Activated CD4-positive, alpha-beta memory T cell treated with anti-CD3 and anti-CD28 coated beads, Interleukin-2, amount 10 ng/mL, durations not matched to agents 7 days and 5 days (primary cell): ENCODE measurements at regions of chr19 and their contacts with region 1.

Region 1: DNA sequence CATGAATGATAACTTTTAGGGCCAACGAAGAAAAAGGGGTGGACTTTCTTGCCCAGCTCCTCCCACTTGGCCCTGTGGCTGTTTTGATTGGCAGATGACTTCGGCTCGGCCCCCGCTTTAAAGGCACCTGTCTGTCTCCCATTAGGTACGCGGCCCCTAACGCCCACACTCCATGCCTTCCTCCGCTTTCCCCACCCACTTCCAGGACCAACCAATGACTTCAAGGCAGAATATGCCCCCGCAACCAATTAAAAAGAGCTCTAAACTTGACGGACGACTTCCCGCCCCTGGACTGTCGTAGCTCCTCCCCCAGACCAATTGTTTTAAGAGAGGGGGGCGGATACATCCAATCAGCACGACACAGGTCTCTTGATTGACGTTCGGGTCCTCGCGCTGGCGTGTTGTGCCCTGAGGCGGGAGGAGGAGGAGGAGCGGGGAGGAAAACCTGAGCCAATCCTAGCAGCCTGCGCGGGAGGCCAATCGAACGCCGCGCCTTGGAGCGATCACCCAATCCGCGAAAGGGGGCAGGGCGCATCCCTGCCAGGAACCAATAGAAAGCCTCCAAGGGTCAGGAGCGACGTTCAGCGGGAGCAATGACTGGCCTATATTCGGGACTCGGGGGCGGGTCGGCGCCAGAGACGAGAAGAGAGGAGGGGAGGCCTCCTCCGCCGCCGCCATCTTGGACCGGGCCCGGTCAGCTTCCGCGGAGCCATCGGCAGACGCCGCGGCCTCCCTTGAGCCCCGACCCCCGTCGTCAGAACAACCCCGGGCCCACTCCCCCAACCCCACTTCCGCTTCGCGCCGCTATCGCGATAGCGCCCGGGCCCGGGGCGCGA is at the start of gene CNOT3:
- DNase-seq: peak; percentile 99
- H3K4me3 Mint-ChIP-seq: peak within 1 kb of the TSS; percentile 82
- H3K27ac Mint-ChIP-seq: peak within 1 kb of the TSS; percentile 83
- H3K4me1 Mint-ChIP-seq: peaks cover 39% of the 10 kb centered on the region
- H3K27me3 Mint-ChIP-seq: no peaks in the 10 kb centered on the region
- total RNA-seq, gene CNOT3: 62.6 to 66.9 TPM

Region 2: DNA sequence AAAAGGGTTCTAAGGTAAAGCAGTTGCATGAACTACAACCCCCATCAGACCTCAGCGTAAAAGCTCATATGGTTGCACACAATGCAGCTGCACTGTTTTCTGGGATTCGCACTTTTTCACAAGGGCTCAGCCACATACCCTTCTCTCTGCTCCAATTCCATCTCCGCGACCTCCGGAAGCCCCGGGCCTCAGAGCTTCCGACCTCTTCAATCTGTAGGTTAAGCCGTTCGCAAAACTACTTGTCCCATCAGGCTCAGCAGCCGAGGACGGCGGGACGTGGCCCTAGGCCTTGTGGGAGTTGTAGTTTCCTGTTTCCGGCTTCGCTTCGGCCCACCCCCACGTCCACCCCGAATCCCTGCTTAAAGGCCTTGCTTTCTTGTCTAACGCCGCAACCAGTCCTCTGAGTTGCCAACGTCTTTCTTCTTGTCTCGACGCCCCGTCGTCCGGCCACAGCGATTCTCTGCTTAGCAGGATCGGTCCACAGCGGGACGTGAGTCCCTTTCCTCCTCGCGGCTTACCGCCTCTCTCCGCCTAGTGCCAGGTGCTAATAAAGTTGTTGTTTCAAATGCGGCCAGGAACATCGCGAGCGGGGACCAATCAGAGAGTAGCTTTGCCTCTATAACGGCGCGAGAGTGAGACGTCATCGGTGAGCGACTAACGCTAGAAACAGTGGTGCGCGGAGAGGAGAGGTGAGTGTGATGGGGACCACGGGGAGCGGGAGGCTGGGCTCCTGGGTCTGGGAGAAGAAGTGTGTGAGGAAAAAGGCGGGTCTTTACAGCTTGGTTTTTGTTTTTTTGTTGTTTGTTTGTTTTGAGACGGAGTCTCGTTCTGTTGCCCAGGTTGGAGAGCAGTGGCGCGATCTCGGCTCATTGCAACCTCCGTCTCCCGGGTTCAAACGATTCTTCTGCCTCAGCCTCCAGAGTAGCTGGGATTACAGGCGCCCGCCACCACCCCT is 21.9 kb before region 1 on chr19 and contains the starts of genes PRPF31 and TFPT:
- CTCF ChIA-PET with region 1: interaction called, 16 read pairs
- POLR2A ChIA-PET with region 1: interaction called, 52 read pairs
- DNase-seq: peak; percentile 97
- H3K4me3 Mint-ChIP-seq: peak within 1 kb of the TSS; percentile 86
- H3K27ac Mint-ChIP-seq: peak within 1 kb of the TSS; percentile 74
- H3K4me1 Mint-ChIP-seq: peaks cover 35% of the 10 kb centered on the region
- H3K27me3 Mint-ChIP-seq: no peaks in the 10 kb centered on the region
- total RNA-seq, gene PRPF31: 53.5 to 55.0 TPM
- total RNA-seq, gene TFPT: 44.4 to 47.1 TPM

Region 3: DNA sequence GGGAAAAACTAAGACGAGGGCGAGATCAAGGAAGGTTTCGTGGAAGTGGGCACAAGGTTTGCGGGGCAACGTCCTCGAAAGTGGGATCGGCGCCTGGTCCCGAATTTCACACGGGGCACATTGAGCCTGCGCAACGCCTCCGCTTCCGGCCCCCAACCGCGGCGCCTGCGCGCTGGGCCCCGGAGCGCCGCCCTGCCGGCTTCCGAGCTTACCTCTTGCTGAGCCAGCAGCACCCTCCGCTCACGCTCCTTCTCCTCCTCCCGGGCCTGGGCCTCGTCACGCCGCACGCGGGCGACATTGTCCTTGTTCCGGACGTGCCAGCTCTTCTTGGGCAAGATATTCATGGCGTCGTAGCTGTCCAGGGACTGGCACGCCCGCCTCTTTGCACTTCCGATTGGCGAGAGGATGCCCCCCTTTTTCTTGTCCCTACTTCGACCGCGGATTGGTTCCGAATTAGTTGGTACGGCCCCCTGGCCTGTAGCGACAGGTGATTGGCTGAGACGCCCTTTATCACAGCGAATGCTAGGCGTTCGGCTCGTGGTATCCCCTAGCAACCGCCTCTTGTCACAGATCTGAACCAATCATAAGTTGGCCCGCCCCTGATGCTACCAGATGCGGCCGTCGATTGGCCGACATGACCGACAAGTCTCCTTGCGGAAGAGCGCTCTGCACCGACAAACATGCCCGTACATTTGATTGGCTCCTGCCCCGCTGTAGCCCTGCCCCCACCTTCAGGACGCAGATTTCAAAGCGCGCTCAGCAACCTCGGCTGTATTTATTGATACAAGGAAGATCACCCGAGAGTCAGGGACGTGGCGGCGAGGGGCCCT is 22.3 kb after region 1 on chr19 and contains the start of gene LENG1:
- CTCF ChIA-PET with region 1: interaction called, 24 read pairs
- POLR2A ChIA-PET with region 1: interaction called, 66 read pairs
- DNase-seq: peak; percentile 100
- H3K4me3 Mint-ChIP-seq: peak within 1 kb of the TSS; percentile 94
- H3K27ac Mint-ChIP-seq: peak within 1 kb of the TSS; percentile 98
- H3K4me1 Mint-ChIP-seq: peaks cover 67% of the 10 kb centered on the region
- H3K27me3 Mint-ChIP-seq: peaks cover 1% of the 10 kb centered on the region
- total RNA-seq, gene LENG1: 8.3 to 9.2 TPM

Region 4: GRCh38 chr19:54189735-54190502 is 52.6 kb after region 1 on chr19:
- CTCF ChIA-PET with region 1: interaction called, 9 read pairs
- POLR2A ChIA-PET with region 1: interaction called, 15 read pairs
- DNase-seq: peak; percentile 100
- H3K4me3 Mint-ChIP-seq: peak overlapping the region; percentile 85
- H3K27ac Mint-ChIP-seq: peak overlapping the region; percentile 99
- H3K4me1 Mint-ChIP-seq: peaks cover 41% of the 10 kb centered on the region
- H3K27me3 Mint-ChIP-seq: no peaks in the 10 kb centered on the region

Region 5: GRCh38 chr19:54203151-54203611 is 65.9 kb after region 1 on chr19:
- CTCF ChIA-PET with region 1: no interaction called
- POLR2A ChIA-PET with region 1: interaction called, 23 read pairs
- DNase-seq: no peak
- H3K4me3 Mint-ChIP-seq: peak overlapping the region; percentile 91
- H3K27ac Mint-ChIP-seq: peak overlapping the region; percentile 55
- H3K4me1 Mint-ChIP-seq: peaks cover 78% of the 10 kb centered on the region
- H3K27me3 Mint-ChIP-seq: no peaks in the 10 kb centered on the region

Region 6: DNA sequence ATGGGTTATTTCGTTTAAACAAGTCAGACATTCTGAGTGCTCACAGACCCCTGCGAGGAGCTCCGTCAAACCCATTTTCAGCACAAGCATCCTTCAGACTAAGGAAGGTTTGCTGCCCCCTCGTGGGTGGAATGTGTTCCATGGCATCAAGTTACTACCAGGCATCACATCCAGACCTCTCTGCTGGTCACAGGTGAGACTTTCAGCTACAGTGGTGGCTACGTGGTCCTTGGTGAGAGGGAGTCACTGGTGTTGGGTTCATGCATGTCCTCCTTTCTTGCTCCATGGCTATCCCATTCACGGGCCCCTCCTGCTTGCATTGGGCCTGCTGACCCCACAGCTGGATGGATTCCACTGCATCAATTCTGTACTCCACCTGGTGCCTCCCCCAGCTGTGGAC is 128.8 kb after region 1 on chr19:
- CTCF ChIA-PET with region 1: interaction called, 11 read pairs
- POLR2A ChIA-PET with region 1: no interaction called
- DNase-seq: peak; percentile 77
- H3K4me3 Mint-ChIP-seq: no peak overlapping the region
- H3K27ac Mint-ChIP-seq: no peak overlapping the region
- H3K4me1 Mint-ChIP-seq: no peaks in the 10 kb centered on the region
- H3K27me3 Mint-ChIP-seq: peaks cover 36% of the 10 kb centered on the region

Region 7: DNA sequence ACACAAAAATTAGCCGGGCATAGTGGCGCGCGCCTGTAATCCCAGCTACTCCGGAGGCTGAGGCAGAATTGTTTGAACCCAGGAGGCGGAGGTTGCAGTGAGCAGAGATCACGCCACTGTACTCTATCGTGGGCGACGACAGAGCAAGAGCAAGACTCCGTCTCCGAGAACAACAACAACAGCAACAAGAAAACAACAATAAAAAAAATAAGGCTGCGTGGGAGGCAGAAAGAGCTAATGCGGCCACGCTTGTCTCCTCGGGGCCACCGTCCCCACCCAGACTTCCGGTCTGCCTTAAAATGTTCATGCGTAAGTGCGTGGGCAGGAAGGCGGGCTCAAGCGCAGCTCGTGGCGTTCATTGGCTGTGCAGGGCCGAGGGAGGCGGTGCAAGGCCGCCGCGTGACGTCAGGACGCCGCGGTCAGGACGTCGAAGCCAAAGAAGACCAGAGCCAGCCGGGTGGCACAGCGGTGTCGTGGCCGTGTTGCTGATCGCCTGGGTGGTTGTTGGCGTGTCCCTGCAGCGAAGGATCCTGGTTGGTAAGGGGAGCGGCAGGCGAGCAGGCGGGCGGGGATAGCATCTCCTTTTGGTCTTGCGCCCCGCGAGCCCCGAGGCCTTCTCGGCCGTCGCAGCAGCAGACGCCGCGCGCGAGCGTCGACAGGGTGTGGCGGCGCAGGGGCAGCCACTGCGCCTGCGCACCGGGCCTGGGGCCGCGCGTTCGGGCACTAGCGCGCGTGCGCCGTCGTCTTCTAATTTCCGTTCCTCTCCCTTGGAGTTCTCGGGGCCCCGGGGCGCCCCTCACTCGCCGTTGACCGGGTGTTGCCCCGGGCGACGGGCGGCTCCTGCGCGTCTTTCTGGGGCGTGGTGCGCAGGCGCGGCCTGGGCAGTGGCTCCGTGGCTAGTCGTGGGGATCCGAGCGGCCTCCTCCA is 311.7 kb after region 1 on chr19 and contains the start of gene LENG8:
- CTCF ChIA-PET with region 1: no interaction called
- POLR2A ChIA-PET with region 1: interaction called, 14 read pairs
- DNase-seq: peak; percentile 98
- H3K4me3 Mint-ChIP-seq: peak within 1 kb of the TSS; percentile 99
- H3K27ac Mint-ChIP-seq: peak within 1 kb of the TSS; percentile 97
- H3K4me1 Mint-ChIP-seq: peaks cover 49% of the 10 kb centered on the region
- H3K27me3 Mint-ChIP-seq: no peaks in the 10 kb centered on the region
- total RNA-seq, gene LENG8: 231 to 233 TPM